ENCODE measurements at regions of chr6 and their contacts with region 1.

Region 1: GRCh38 chr6:70706491-70707123 is 38.9 kb downstream of the SMAP1 start:
- H3K4me3 ChIP-seq: no peak overlapping the region
- H3K27ac ChIP-seq: no peak overlapping the region
- H3K4me1 ChIP-seq: no peaks in the 10 kb centered on the region
- CTCF ChIP-seq: 0 out of 2 replicates have a peak, but pooled peaks have one; percentile 11

Region 2: DNA sequence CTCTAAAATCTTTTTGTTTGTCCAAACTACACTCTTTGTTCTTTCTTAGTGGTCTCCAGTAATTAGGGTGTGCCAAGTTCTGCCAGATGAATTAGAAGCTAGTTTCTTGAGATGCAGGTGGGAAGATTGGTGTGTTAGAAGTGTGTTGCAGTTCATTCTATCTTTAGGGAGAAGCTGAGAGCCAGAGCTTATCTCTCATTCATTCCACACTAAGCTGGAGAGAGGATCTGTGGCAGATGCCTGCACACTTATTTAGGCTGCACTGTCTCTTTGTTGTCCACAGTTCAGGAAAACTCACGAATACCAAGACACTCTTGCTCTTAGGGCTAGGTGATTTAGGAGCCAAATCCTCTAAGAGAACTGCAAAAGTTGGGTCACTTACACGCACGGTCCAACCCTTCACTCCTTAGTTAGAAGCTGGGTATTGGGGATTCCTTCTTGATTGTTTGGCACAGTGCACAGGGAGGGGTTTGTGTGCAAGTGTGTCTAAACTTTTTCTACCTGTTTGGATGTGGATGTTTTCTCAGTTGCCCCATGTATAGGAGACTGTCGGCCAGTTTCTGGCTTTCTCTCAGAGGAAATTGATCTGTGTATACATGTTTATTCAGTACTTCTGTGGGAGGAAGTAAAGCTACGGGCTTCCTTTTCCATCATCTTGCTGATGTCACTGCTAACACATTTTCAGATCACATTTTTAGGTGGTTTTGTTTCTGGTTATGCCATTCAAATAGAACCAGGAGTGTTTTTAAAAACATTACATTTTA is 10.6 kb after region 1 on chr6:
- CTCF ChIA-PET with region 1: interaction called, 14 read pairs
- POLR2A ChIA-PET with region 1: interaction called, 4 read pairs
- H3K4me3 ChIP-seq: no peak overlapping the region
- H3K27ac ChIP-seq: no peak overlapping the region
- H3K4me1 ChIP-seq: no peaks in the 10 kb centered on the region
- CTCF ChIP-seq: no peak

Region 3: GRCh38 chr6:70955441-70956190 is 249.0 kb after region 1 on chr6:
- CTCF ChIA-PET with region 1: interaction called, 19 read pairs
- POLR2A ChIA-PET with region 1: no interaction called
- H3K4me3 ChIP-seq: peak overlapping the region; percentile 57
- H3K27ac ChIP-seq: no peak overlapping the region; the same call in 1 of the 2 replicates
- H3K4me1 ChIP-seq: no peaks in the 10 kb centered on the region
- CTCF ChIP-seq: peak; percentile 96

Region 4: DNA sequence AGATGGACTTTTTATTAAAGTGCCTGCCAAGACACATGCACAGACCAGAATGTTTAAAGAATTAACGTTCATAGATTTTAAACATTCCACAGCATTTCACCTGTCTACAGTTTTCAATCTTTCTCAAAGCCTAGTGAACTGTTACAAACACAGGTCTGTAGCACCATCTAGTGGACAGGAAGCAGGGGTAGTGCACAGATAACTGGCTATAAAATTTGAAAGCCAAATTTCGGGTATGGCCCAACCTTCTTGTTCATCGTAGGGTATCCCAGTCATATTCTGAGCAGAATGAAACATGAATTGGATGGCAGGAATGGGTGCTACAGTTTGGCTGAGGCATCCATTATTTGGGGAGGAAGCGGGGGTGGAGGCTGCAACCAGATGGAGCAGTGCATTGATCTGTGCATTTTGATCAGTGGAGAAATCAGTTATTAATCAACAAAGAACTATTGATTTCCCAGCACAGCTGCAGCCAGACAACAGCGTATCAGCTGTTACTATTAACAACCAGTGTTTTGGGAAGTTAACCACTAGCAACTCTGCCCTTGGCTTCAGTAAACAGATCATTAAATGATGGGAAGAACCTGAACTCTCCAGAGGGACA is 306.4 kb after region 1 on chr6:
- CTCF ChIA-PET with region 1: interaction called, 21 read pairs
- POLR2A ChIA-PET with region 1: no interaction called
- H3K4me3 ChIP-seq: no peak overlapping the region
- H3K27ac ChIP-seq: no peak overlapping the region
- H3K4me1 ChIP-seq: no peaks in the 10 kb centered on the region
- CTCF ChIP-seq: peak; percentile 42; the same call in 1 of the 2 replicates

Measured in HEK293 (cell line).